SK-N-SH (cell line): ENCODE measurements at regions of chr11 and their contacts with region 1.

Region 1: DNA sequence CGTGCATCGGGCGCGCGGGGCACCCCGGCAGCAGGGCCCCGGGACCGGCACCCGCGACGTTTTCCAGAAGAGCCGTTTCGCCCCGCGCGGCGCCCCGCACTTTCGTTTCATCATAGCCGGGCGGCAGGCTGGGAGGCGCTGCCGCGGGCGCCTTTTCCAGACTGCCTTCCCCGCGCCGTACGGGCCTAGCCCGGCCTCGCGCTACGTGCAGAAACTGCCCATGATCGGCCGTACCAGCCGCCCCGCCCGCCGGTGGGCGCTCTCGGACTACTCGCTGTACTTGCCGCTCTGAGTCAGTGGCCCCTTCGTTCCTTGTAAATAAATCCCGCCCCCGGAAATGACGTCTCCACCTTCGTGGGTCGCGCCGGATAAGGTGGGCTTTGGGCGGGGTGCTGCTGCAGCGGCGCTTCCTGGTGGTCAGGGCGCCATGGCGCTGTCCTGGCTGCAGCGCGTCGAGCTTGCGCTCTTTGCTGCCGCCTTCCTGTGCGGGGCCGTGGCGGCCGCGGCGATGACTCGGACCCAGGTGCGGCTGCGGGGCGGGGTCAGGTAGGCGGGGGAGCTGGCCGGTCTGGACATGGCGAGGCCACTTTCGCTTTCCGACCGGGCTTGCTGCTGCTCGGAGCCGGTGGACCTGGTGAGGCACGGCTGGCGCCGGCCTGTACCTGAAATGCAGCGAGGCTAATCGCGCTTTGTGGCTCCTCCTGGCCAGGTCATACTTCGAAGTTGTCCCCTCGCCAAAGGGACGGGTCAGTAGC is at the start of gene TMEM179B:
- DNase-seq: peak; percentile 97
- H3K4me3 ChIP-seq: peak within 1 kb of the TSS; percentile 76 to 87
- H3K27ac ChIP-seq: peak within 1 kb of the TSS; percentile 65 to 89
- H3K4me1 ChIP-seq: peaks cover 6 to 26% of the 10 kb centered on the region in 2 experiments
- H3K27me3 ChIP-seq: no peaks in the 10 kb centered on the region
- CTCF ChIP-seq: peak; percentile 49
- EP300 ChIP-seq: peak in 1 of 2 experiments; percentile 15; a peak in 1 of 4 replicates
- RAD21 ChIP-seq: peak; percentile 27; the same call in 1 of the 2 replicates
- polyA plus RNA-seq, gene TMEM179B: 69.6 and 73.3 TPM in 2 replicates

Region 2: DNA sequence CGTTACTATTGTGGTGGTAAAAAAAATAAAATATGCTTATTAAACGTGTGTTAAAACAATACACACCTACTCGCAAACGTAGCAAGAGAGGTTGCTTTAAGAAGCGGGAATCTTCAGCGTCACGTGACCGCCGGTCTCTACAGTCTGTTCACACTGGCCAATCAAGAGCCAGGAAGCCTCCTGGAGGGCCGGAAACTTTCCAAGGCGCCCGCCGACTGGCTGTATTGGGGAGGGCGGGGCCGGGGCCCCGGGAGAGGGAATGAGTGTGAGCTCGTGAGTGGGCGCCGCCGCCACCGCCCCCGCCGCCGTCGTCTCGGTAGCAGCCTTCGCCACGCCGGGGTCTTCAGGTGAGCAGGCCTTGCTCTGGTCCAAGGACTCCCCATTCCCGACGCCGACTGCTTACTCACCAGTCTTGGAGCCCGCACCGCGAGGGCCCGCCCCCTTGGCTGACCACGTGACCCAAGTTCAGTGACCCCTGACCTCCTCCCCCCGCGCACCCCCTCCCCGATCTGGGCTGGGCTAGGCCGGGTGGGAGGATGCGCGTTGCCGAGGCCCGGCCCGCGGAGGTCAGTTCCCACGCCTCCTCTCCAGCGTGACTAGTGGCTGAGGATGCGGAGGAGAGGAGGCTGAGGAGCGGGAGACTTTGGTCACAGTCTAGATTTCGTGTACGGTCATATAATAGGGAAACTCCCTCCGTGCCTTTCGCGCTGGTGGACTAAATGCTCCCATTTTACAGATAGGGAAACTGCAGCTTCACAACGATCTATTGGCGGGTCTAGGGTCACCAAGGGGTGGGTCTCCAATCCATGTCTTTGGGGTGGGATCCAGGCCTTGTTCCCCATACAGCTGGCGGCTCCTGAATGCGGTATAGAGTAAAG is 15.8 kb before region 1 on chr11 and contains the start of gene TAF6L:
- CTCF ChIA-PET with region 1: interaction called, 130 read pairs
- POLR2A ChIA-PET with region 1: interaction called, 21 read pairs
- DNase-seq: peak; percentile 98
- H3K4me3 ChIP-seq: peak within 1 kb of the TSS; percentile 56 to 74
- H3K27ac ChIP-seq: peak within 1 kb of the TSS; percentile 85 to 88
- H3K4me1 ChIP-seq: peaks cover 0 to 15% of the 10 kb centered on the region in 2 experiments; a peak in 1 of 4 replicates
- H3K27me3 ChIP-seq: no peaks in the 10 kb centered on the region
- CTCF ChIP-seq: no peak
- EP300 ChIP-seq: no peak
- RAD21 ChIP-seq: no peak
- polyA plus RNA-seq, gene TAF6L: 33.6 and 34.4 TPM in 2 replicates

Region 3: GRCh38 chr11:62823677-62824076 is 36.5 kb after region 1 on chr11:
- CTCF ChIA-PET with region 1: interaction called, 24 read pairs
- POLR2A ChIA-PET with region 1: interaction called, 3 read pairs
- DNase-seq: no peak
- H3K4me3 ChIP-seq: no peak overlapping the region
- H3K27ac ChIP-seq: no peak overlapping the region
- H3K4me1 ChIP-seq: no peaks in the 10 kb centered on the region
- H3K27me3 ChIP-seq: no peaks in the 10 kb centered on the region
- CTCF ChIP-seq: no peak
- EP300 ChIP-seq: no peak
- RAD21 ChIP-seq: no peak

Region 4: GRCh38 chr11:62855571-62856332 is 68.6 kb after region 1 on chr11:
- CTCF ChIA-PET with region 1: interaction called, 74 read pairs
- POLR2A ChIA-PET with region 1: interaction called, 30 read pairs
- DNase-seq: peak; percentile 93
- H3K4me3 ChIP-seq: peak overlapping the region; percentile 90 to 94
- H3K27ac ChIP-seq: peak overlapping the region; percentile 61 to 93
- H3K4me1 ChIP-seq: peaks cover 14 to 16% of the 10 kb centered on the region in 2 experiments; a peak in 3 of 4 replicates
- H3K27me3 ChIP-seq: no peaks in the 10 kb centered on the region
- CTCF ChIP-seq: no peak
- EP300 ChIP-seq: no peak
- RAD21 ChIP-seq: no peak

Region 5: GRCh38 chr11:62875698-62876478 is 88.7 kb after region 1 on chr11:
- CTCF ChIA-PET with region 1: interaction called, 54 read pairs
- POLR2A ChIA-PET with region 1: interaction called, 7 read pairs
- DNase-seq: no peak
- H3K4me3 ChIP-seq: no peak overlapping the region
- H3K27ac ChIP-seq: no peak overlapping the region
- H3K4me1 ChIP-seq: peaks cover 13 to 14% of the 10 kb centered on the region in 2 experiments
- H3K27me3 ChIP-seq: no peaks in the 10 kb centered on the region
- CTCF ChIP-seq: no peak
- EP300 ChIP-seq: no peak
- RAD21 ChIP-seq: peak; percentile 7; the same call in 1 of the 2 replicates

Region 6: GRCh38 chr11:63012430-63012829 is 225.2 kb after region 1 on chr11:
- CTCF ChIA-PET with region 1: no interaction called
- POLR2A ChIA-PET with region 1: no interaction called
- DNase-seq: no peak
- H3K4me3 ChIP-seq: no peak overlapping the region
- H3K27ac ChIP-seq: no peak overlapping the region
- H3K4me1 ChIP-seq: peaks cover 3 to 4% of the 10 kb centered on the region in 2 experiments; a peak in 1 of 4 replicates
- H3K27me3 ChIP-seq: no peaks in the 10 kb centered on the region; the same call in none of the 2 replicates
- CTCF ChIP-seq: no peak
- EP300 ChIP-seq: no peak
- RAD21 ChIP-seq: no peak